ENCODE measurements at regions of chr12 and their contacts with region 1.

Region 1: GRCh38 chr12:110600254-110600653 is 13.7 kb upstream of the TCTN1 start:
- DNase-seq: peak in 3 of 10 donors; percentile 57 to 61 (median 60)
- ATAC-seq: peak; percentile 48 to 58
- H3K4me3 Mint-ChIP-seq: no peak overlapping the region
- H3K27ac Mint-ChIP-seq: peak overlapping the region in 6 of 10 donors; percentile 15 to 85 (median 35)
- H3K4me1 Mint-ChIP-seq: peaks cover 4 to 32% (median 10%) of the 10 kb centered on the region in 4 donors
- H3K27me3 Mint-ChIP-seq: no peaks in the 10 kb centered on the region

Region 2: DNA sequence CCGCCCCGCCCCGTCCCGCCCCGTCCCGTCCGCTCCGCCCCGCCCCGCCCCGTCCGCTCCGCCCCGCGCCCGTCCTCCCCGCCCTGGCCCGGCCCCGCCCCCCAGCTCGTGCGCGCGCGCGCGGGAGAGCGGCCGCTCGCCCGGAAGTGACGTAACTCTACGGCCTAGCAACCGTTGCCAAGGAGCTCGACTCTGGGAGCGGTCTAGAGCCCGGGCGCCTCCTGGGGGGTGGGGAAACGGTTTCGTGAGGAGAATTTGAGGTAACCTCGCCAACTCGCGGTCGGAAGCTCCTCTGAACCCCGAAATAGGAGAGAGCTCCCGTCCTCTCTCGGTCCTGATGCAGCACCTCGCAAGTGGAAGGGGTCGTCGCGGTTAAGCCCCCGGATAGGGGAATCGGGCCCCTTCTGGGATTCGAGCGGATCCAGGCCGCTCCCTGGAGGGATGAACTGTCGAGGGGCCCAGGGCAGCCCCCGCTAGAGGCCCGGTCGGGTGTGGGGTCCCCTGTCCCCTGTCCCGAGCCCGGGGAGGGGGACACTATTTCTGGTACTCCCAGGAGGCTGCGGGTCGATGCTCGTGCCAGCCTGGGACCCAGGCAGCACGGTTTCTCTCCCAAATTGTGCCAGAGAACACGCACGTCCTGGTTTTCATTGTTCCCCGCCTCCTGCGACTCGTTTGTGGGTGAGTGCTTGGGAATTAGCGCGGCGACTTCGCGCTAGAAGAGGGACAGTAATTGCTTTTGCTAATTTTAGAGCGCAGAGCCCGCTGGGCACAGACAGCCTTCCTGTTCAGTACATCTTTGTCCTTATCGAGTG is 475.9 kb before region 1 on chr12 and contains the start of gene IFT81:
- POLR2A ChIA-PET with region 1: no interaction called
- DNase-seq: peak; percentile 92 to 99 (median 94)
- ATAC-seq: peak; percentile 87 to 92
- H3K4me3 Mint-ChIP-seq: peak within 1 kb of the TSS; percentile 81 to 96 (median 92)
- H3K27ac Mint-ChIP-seq: peak within 1 kb of the TSS; percentile 19 to 96 (median 92)
- H3K4me1 Mint-ChIP-seq: peaks cover 0 to 11% (median 9%) of the 10 kb centered on the region in 4 donors
- H3K27me3 Mint-ChIP-seq: peaks cover 0 to 4% (median 0%) of the 10 kb centered on the region in 5 donors
- polyA plus RNA-seq, gene IFT81: 0.45 to 0.82 (median 0.56) TPM

Region 3: GRCh38 chr12:110550981-110551380 is 49.3 kb before region 1 on chr12:
- POLR2A ChIA-PET with region 1: interaction called, 14 read pairs
- DNase-seq: no peak
- ATAC-seq: no peak
- H3K4me3 Mint-ChIP-seq: no peak overlapping the region
- H3K27ac Mint-ChIP-seq: peak overlapping the region in 1 of 10 donors; percentile 56
- H3K4me1 Mint-ChIP-seq: peaks cover 16 to 54% (median 48%) of the 10 kb centered on the region in 4 donors
- H3K27me3 Mint-ChIP-seq: no peaks in the 10 kb centered on the region

Region 4: DNA sequence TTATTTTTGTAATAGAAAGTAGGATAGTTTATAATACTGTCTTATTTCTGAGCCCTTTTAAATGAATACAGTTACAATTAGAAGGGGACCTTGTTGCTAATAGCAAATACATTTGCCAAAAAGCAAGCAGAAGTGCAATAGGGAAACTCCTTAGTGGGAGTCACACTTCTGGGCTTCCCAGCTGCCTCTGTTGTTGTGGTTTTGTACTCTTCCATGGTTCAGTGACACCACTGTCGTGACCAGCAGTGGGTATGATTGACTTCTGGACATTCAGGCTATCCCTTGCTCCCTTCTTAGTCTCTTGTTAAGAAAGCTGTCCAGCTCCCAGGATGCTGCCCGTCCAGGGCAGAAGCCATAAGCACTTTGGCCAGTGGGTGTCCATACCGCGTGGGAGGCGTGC is 36.3 kb after region 1 on chr12:
- POLR2A ChIA-PET with region 1: no interaction called
- DNase-seq: no peak
- ATAC-seq: no peak
- H3K4me3 Mint-ChIP-seq: no peak overlapping the region
- H3K27ac Mint-ChIP-seq: peak overlapping the region in 2 of 10 donors; percentile 10 to 28
- H3K4me1 Mint-ChIP-seq: peaks cover 19 to 70% (median 24%) of the 10 kb centered on the region in 4 donors
- H3K27me3 Mint-ChIP-seq: no peaks in the 10 kb centered on the region

Region 5: GRCh38 chr12:110726708-110727369 is 126.6 kb after region 1 on chr12:
- POLR2A ChIA-PET with region 1: no interaction called
- DNase-seq: no peak
- ATAC-seq: no peak
- H3K4me3 Mint-ChIP-seq: no peak overlapping the region
- H3K27ac Mint-ChIP-seq: peak overlapping the region in 8 of 10 donors; percentile 37 to 92 (median 72)
- H3K4me1 Mint-ChIP-seq: peaks cover 14 to 60% (median 39%) of the 10 kb centered on the region in 4 donors
- H3K27me3 Mint-ChIP-seq: no peaks in the 10 kb centered on the region

Region 6: GRCh38 chr12:110750784-110751461 is 150.7 kb after region 1 on chr12:
- POLR2A ChIA-PET with region 1: no interaction called
- DNase-seq: no peak
- ATAC-seq: no peak
- H3K4me3 Mint-ChIP-seq: no peak overlapping the region
- H3K27ac Mint-ChIP-seq: no peak overlapping the region
- H3K4me1 Mint-ChIP-seq: no peaks in the 10 kb centered on the region
- H3K27me3 Mint-ChIP-seq: no peaks in the 10 kb centered on the region